ENCODE measurements at regions of chr5 and their contacts with region 1.

Region 1: DNA sequence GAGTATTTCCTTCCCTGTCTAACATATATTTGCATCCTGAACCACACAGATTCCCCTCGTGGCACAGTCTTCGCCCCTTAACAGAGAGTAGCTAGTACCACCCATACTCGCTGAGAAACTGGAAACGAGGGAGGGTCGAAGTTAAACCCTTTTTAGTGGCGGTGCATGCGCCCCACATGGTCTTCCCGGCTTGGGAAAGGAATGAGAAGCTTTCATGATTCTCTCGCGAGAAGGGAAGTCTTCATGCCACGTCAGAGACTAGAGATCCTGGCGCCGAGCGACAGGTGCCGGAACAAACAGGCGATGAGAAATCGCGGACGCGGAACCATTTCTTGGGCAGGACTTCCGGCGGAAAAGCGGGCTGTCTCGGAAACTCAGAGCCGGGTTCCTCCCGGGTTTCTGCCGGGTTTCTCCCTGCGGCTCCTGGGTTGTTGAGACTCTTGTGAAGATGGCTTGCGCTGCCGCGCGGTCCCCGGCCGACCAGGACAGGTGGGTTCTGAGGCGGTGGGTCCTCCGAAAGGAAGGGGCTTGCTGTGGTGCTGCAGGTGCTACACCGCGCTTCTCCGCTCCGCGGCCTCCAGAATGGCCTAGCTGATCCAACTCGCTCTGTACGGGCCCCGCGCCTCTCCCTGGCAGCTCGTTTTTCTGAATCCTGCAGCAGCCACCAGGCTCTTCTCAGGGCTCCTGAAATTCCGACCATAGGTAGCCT is at the start of gene SRP19:
- DNase-seq: peak; percentile 94
- H3K4me3 Mint-ChIP-seq: peak within 1 kb of the TSS; percentile 83
- H3K27ac Mint-ChIP-seq: peak within 1 kb of the TSS; percentile 89
- H3K4me1 Mint-ChIP-seq: peaks cover 19% of the 10 kb centered on the region
- H3K27me3 Mint-ChIP-seq: peaks cover 9% of the 10 kb centered on the region
- CTCF ChIP-seq: no peak
- total RNA-seq, gene SRP19: 65.5 and 67.0 TPM in 2 replicates

Region 2: GRCh38 chr5:112795944-112796678 is 65.0 kb before region 1 on chr5:
- CTCF ChIA-PET with region 1: no interaction called
- intact Hi-C with region 1: no loop called
- DNase-seq: no peak
- H3K4me3 Mint-ChIP-seq: no peak overlapping the region
- H3K27ac Mint-ChIP-seq: peak overlapping the region; percentile 23
- H3K4me1 Mint-ChIP-seq: peaks cover 9% of the 10 kb centered on the region
- H3K27me3 Mint-ChIP-seq: no peaks in the 10 kb centered on the region
- CTCF ChIP-seq: no peak

Region 3: GRCh38 chr5:112848116-112848811 is 12.8 kb before region 1 on chr5:
- CTCF ChIA-PET with region 1: interaction called, 16 read pairs
- intact Hi-C with region 1: no loop called
- DNase-seq: peak; percentile 21
- H3K4me3 Mint-ChIP-seq: no peak overlapping the region
- H3K27ac Mint-ChIP-seq: no peak overlapping the region
- H3K4me1 Mint-ChIP-seq: no peaks in the 10 kb centered on the region
- H3K27me3 Mint-ChIP-seq: no peaks in the 10 kb centered on the region
- CTCF ChIP-seq: peak; percentile 64

Region 4: GRCh38 chr5:112921833-112922817 is 61.0 kb after region 1 on chr5 and contains the start of gene REEP5:
- CTCF ChIA-PET with region 1: no interaction called
- intact Hi-C with region 1: loop called (anchors 5 kb)
- DNase-seq: peak; percentile 93
- H3K4me3 Mint-ChIP-seq: peak within 1 kb of the TSS; percentile 100
- H3K27ac Mint-ChIP-seq: peak within 1 kb of the TSS; percentile 81
- H3K4me1 Mint-ChIP-seq: peaks cover 31% of the 10 kb centered on the region
- H3K27me3 Mint-ChIP-seq: no peaks in the 10 kb centered on the region
- CTCF ChIP-seq: peak; percentile 83
- total RNA-seq, gene REEP5: 123 and 130 TPM in 2 replicates

Region 5: GRCh38 chr5:112968411-112969106 is 107.5 kb after region 1 on chr5:
- CTCF ChIA-PET with region 1: no interaction called
- intact Hi-C with region 1: loop called (anchors 10 kb)
- DNase-seq: no peak
- H3K4me3 Mint-ChIP-seq: no peak overlapping the region
- H3K27ac Mint-ChIP-seq: no peak overlapping the region
- H3K4me1 Mint-ChIP-seq: peaks cover 41% of the 10 kb centered on the region
- H3K27me3 Mint-ChIP-seq: no peaks in the 10 kb centered on the region
- CTCF ChIP-seq: no peak

Measured in Calu3 (cell line).